IMR-90 (cell line): ENCODE measurements at regions of chr13 and their contacts with region 1.

Region 1: GRCh38 chr13:80342471-80343380 is 1.8 kb upstream of the SPRY2 start:
- DNase-seq: peak; percentile 66
- ATAC-seq: peak; percentile 31
- H3K4me3 ChIP-seq: peak overlapping the region; percentile 53
- H3K27ac ChIP-seq: peak overlapping the region; percentile 74
- H3K4me1 ChIP-seq: no peaks in the 10 kb centered on the region; the same call in 1 of the 2 replicates
- H3K27me3 ChIP-seq: no peaks in the 10 kb centered on the region
- CTCF ChIP-seq: peak; percentile 96
- POLR2A ChIP-seq: peak; percentile 63; the same call in 1 of the 2 replicates
- RAD21 ChIP-seq: peak; percentile 71

Region 2: DNA sequence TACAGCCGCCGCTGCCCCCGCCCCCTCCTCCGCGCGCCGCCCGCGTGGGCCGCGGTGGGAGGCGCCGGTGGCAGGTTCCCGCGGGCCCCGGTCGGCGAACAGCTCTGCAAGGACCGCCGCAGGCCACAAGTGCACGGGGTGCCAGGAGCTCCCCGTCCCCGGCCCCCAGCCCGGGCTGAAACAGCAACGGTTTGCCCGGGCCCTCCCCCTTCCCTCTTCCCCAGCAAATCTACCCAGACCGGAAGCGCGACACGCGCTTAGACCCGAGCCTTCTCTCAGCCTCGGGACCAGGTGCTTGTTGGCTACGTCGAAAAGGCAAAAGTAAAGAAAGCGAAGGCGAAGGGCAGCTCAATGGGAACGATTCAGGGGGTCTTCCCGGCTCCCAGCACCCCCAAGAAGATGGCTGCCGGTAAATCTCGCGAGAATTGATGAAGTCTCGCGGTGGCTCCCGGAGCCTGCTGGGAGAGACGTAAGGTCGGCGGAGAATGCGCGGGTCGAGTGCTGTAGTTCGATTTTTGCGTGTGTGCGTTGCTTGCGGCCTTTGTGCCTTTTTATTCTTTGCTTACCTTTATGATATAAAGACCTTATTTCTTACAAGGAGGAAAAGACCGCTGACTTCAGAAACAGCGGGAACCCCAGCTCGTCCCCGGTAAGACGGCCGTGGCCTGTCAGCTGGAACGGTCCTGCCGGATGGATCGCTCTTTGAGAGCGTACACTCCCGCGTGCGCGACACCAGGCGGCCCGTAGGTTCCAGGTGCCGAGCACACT is 936.7 kb before region 1 on chr13 and contains the start of gene RBM26:
- CTCF ChIA-PET with region 1: no interaction called
- POLR2A ChIA-PET with region 1: no interaction called
- dilution Hi-C with region 1: no loop called
- in situ Hi-C with region 1: loop called (anchors 25 kb)
- intact Hi-C with region 1: no loop called
- DNase-seq: peak; percentile 94
- ATAC-seq: peak; percentile 94
- H3K4me3 ChIP-seq: peak within 1 kb of the TSS; percentile 89
- H3K27ac ChIP-seq: peak within 1 kb of the TSS; percentile 97
- H3K4me1 ChIP-seq: peaks cover 3% of the 10 kb centered on the region; the same call in 1 of the 2 replicates
- H3K27me3 ChIP-seq: no peaks in the 10 kb centered on the region
- CTCF ChIP-seq: no peak
- POLR2A ChIP-seq: peak; percentile 75
- RAD21 ChIP-seq: no peak
- total RNA-seq, gene RBM26: 17.6 and 26.1 TPM in 2 replicates

Region 3: DNA sequence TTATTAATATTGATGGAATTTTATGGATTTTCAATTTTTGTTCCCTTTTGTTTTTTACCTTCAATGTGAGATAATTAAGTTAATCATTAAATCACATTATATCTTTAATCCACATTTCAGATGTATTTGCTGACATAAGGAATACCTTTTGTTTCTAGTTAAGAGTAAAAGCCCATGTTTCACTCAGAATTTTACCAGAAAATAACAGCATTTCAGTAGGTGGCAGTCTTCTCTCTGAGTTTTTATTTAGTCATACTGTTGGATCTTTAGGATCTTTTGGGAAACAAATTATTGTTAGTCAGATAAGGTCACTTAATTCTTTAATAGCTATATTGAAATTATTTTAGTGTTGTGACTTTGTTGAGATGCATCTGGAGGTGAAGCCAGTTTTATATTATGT is 793.8 kb before region 1 on chr13:
- CTCF ChIA-PET with region 1: interaction called, 3 read pairs
- POLR2A ChIA-PET with region 1: no interaction called
- dilution Hi-C with region 1: no loop called
- in situ Hi-C with region 1: no loop called
- intact Hi-C with region 1: loop called (anchors 1 kb)
- DNase-seq: peak; percentile 11
- ATAC-seq: peak; percentile 75
- H3K4me3 ChIP-seq: no peak overlapping the region
- H3K27ac ChIP-seq: no peak overlapping the region
- H3K4me1 ChIP-seq: peaks cover 2% of the 10 kb centered on the region; the same call in 1 of the 2 replicates
- H3K27me3 ChIP-seq: no peaks in the 10 kb centered on the region
- CTCF ChIP-seq: peak; percentile 43
- POLR2A ChIP-seq: no peak
- RAD21 ChIP-seq: peak; percentile 36

Region 4: DNA sequence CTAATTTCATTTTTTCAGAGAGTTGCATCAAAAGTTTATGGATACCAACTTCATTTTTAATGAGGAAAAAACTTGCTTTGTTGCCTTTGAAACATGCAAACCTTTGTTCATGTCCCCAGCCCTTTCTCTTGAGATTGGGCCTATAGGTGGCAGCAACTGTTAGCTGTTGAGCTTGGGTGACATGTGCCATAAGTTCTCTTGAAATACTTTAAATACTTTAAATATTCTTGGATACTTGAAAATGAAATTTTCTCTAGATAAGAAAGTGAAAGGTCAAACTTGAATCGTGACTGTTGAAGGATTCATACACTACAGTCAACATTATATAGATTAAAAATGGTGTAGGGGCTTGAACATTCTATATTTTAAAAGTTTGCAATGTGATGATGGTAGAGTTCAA is 566.9 kb before region 1 on chr13:
- CTCF ChIA-PET with region 1: interaction called, 3 read pairs
- POLR2A ChIA-PET with region 1: no interaction called
- dilution Hi-C with region 1: no loop called
- in situ Hi-C with region 1: no loop called
- intact Hi-C with region 1: loop called (anchors 1 kb)
- DNase-seq: peak; percentile 87
- ATAC-seq: peak; percentile 83
- H3K4me3 ChIP-seq: no peak overlapping the region
- H3K27ac ChIP-seq: no peak overlapping the region
- H3K4me1 ChIP-seq: peaks cover 7% of the 10 kb centered on the region
- H3K27me3 ChIP-seq: no peaks in the 10 kb centered on the region
- CTCF ChIP-seq: peak; percentile 81
- POLR2A ChIP-seq: no peak
- RAD21 ChIP-seq: peak; percentile 93

Region 5: GRCh38 chr13:80040196-80040980 is 302.3 kb before region 1 on chr13:
- CTCF ChIA-PET with region 1: no interaction called
- POLR2A ChIA-PET with region 1: no interaction called
- dilution Hi-C with region 1: no loop called
- in situ Hi-C with region 1: loop called (anchors 10 kb)
- intact Hi-C with region 1: loop called (anchors 2 kb)
- DNase-seq: peak; percentile 100
- ATAC-seq: peak; percentile 92
- H3K4me3 ChIP-seq: no peak overlapping the region
- H3K27ac ChIP-seq: no peak overlapping the region
- H3K4me1 ChIP-seq: peaks cover 10% of the 10 kb centered on the region; the same call in 1 of the 2 replicates
- H3K27me3 ChIP-seq: no peaks in the 10 kb centered on the region
- CTCF ChIP-seq: no peak
- POLR2A ChIP-seq: no peak
- RAD21 ChIP-seq: peak; percentile 19

Region 6: GRCh38 chr13:80132741-80133601 is 209.8 kb before region 1 on chr13:
- CTCF ChIA-PET with region 1: no interaction called
- POLR2A ChIA-PET with region 1: no interaction called
- dilution Hi-C with region 1: no loop called
- in situ Hi-C with region 1: no loop called
- intact Hi-C with region 1: loop called (anchors 5 kb)
- DNase-seq: peak; percentile 62
- ATAC-seq: peak; percentile 88
- H3K4me3 ChIP-seq: peak overlapping the region; percentile 26
- H3K27ac ChIP-seq: peak overlapping the region; percentile 13
- H3K4me1 ChIP-seq: peaks cover 3% of the 10 kb centered on the region; the same call in 1 of the 2 replicates
- H3K27me3 ChIP-seq: no peaks in the 10 kb centered on the region
- CTCF ChIP-seq: no peak
- POLR2A ChIP-seq: no peak
- RAD21 ChIP-seq: no peak

Region 7: DNA sequence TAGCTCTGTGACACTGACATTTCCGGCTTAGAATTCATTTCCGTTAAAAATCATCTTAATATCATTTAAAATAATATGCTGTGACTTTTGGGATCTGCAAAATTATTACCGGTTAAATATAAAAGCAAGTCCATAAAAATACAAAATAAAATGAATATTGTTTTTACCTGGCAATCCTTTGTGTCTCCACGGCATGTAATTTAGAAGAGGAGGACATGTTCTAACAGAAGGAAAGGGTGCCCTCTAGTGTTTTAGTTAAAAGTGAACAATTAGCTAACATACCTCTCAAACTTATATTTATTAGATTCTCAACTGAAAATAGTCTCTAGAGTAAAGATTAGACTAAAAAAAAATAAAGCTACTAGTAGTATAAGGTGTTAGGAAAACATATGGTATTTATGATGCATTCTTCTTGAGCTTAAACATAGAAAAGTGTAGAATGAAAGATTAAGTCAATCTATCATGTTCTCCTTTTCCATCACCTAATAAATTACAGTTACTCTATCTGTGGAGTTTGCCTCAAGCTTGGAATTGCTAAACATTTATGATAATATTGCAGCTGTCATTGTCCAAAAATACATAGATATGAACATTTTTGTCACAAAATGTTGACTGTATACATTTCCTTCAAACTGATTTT is 674.9 kb after region 1 on chr13:
- CTCF ChIA-PET with region 1: no interaction called
- POLR2A ChIA-PET with region 1: no interaction called
- dilution Hi-C with region 1: no loop called
- in situ Hi-C with region 1: no loop called
- intact Hi-C with region 1: loop called (anchors 2 kb)
- DNase-seq: peak; percentile 25
- ATAC-seq: peak; percentile 49
- H3K4me3 ChIP-seq: no peak overlapping the region
- H3K27ac ChIP-seq: no peak overlapping the region
- H3K4me1 ChIP-seq: no peaks in the 10 kb centered on the region
- H3K27me3 ChIP-seq: no peaks in the 10 kb centered on the region
- CTCF ChIP-seq: peak; percentile 47
- POLR2A ChIP-seq: no peak
- RAD21 ChIP-seq: peak; percentile 54